ENCODE measurements at regions of chr3 and their contacts with region 1.

Region 1: GRCh38 chr3:23600167-23600871 is 205.4 kb upstream of the UBE2E1 start:
- DNase-seq: peak; percentile 96
- ATAC-seq: peak; percentile 95
- H3K4me3 ChIP-seq: no peak overlapping the region
- H3K27ac ChIP-seq: no peak overlapping the region
- H3K4me1 ChIP-seq: peaks cover 12% of the 10 kb centered on the region
- H3K27me3 ChIP-seq: no peaks in the 10 kb centered on the region
- CTCF ChIP-seq: no peak
- POLR2A ChIP-seq: no peak
- RAD21 ChIP-seq: no peak; the same call in 1 of the 2 replicates

Region 2: DNA sequence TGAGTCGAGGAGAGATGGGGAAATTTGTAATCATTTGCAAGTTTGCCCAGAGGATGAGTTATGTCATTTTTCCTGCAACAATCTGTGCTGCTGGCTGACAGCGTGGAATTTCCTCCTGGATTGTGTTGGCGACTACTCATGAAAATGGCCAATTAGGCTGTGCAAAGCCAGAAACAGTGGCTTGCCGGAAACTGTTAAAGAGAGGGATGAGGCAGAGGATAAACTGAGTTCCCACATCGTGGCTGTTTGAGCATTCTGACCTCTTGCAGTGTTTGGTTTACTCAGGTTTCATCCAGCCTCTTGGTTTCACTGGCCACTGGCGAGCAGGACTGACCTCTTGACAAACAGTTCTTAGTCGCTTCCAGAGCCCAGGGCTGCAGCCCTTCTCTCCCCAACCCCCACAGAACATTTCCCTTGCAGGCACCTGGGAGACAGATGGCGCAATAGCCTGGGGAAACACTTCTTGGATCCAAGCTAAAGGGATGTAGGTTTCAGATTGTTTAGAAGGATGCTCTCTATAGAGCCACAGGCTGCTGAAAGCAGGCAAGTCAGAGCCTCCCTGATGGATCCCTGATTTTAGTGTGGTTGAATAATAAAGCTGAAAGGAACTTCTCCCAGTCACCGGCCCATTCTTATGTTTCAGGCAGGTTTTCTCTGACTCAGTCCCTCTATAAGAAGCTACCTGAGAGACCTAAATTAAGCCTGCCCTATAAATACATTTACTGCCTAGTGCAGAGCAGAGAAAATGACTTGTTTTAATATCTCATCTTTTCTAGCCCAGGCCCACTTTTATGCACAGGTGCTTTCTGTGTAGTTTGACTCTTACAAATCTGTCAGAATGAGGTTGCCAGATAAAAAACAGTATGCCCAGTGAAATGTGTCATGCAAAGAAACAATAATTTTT is 112.6 kb after region 1 on chr3:
- CTCF ChIA-PET with region 1: no interaction called
- POLR2A ChIA-PET with region 1: no interaction called
- dilution Hi-C with region 1: no loop called
- in situ Hi-C with region 1: no loop called
- intact Hi-C with region 1: loop called (anchors 5 kb)
- DNase-seq: peak; percentile 96
- ATAC-seq: peak; percentile 84
- H3K4me3 ChIP-seq: no peak overlapping the region
- H3K27ac ChIP-seq: no peak overlapping the region
- H3K4me1 ChIP-seq: peaks cover 10% of the 10 kb centered on the region
- H3K27me3 ChIP-seq: no peaks in the 10 kb centered on the region
- CTCF ChIP-seq: 0 out of 2 replicates have a peak, but pooled peaks have one; percentile 14
- POLR2A ChIP-seq: no peak
- RAD21 ChIP-seq: no peak; the same call in 1 of the 2 replicates

Region 3: DNA sequence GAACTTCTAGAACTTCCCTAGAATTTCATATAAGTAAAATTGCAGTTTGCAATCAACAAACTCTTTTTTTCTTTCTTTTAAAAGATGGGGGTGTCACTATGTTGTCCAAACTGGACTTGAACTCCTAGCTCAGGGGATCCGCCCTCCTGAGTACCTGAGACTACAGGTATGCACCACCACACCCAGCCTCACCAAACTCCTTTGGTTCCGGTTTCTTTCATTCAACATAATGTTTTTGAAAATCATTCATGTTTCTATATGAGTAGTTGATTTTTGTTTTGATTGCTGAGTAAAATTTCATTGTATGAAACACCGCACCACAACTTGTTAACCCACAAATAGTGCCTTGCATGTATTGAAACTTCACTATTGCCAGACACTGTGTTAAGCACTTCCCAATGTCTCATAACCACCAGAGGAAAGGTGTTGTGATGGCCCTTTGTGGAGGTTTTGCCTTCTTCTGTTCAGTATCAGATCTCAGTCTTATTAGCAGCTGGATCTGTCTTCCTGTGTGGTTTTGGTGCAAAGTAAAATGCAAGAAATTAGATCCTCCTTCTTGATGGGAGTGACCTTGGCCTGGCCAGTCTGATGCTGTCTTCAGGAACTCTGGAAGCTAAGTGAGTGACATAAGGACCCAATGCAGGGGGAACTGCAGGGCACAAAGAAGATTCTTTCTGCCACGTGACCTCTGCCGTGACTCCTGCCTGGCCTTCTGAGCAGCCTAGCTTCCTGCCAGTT is 126.7 kb after region 1 on chr3:
- CTCF ChIA-PET with region 1: no interaction called
- POLR2A ChIA-PET with region 1: no interaction called
- dilution Hi-C with region 1: no loop called
- in situ Hi-C with region 1: no loop called
- intact Hi-C with region 1: loop called (anchors 1 kb)
- DNase-seq: no peak
- ATAC-seq: no peak
- H3K4me3 ChIP-seq: no peak overlapping the region
- H3K27ac ChIP-seq: no peak overlapping the region
- H3K4me1 ChIP-seq: peaks cover 13% of the 10 kb centered on the region
- H3K27me3 ChIP-seq: peaks cover 2% of the 10 kb centered on the region
- CTCF ChIP-seq: no peak
- POLR2A ChIP-seq: no peak
- RAD21 ChIP-seq: no peak

Region 4: DNA sequence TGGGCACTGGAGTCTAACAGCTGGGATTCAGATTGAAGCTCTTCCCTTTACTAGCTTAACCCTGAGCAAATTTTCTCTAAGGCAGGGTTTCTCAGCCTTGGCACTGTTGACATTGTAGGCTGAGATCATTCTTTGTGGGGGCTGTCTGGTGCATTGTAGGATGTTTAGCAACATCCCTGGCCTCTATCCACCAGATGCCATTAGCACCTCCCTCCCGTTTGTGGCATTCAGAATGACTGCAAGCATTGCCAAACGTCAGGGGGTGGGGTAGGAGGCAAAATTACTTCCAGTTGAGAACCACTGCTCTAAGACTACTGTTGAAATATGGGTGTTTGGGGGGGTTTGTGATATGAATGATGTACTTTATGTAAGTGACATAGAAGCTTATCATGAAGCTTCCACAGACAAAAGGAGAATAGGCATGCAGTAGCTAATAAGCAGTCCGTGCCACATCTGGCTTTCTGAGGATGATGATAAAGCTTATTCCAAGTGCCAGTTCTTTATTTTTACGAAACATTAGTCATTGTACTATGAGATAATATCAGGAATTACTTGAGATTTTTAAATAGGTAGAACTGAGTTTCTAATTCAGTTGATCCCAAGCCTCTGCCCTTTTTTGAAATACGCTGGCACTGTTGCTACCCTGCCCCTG is 277.1 kb after region 1 on chr3:
- CTCF ChIA-PET with region 1: no interaction called
- POLR2A ChIA-PET with region 1: no interaction called
- dilution Hi-C with region 1: no loop called
- in situ Hi-C with region 1: no loop called
- intact Hi-C with region 1: loop called (anchors 1 kb)
- DNase-seq: peak; percentile 81
- ATAC-seq: peak; percentile 61
- H3K4me3 ChIP-seq: no peak overlapping the region
- H3K27ac ChIP-seq: no peak overlapping the region
- H3K4me1 ChIP-seq: peaks cover 16% of the 10 kb centered on the region
- H3K27me3 ChIP-seq: no peaks in the 10 kb centered on the region
- CTCF ChIP-seq: no peak
- POLR2A ChIP-seq: no peak
- RAD21 ChIP-seq: no peak